HepG2 (cell line): ENCODE measurements at regions of chr6 and their contacts with region 1.

Region 1: GRCh38 chr6:28225056-28225834 is at the start of gene ZSCAN9:
- DNase-seq: peak; percentile 86
- ATAC-seq: peak; percentile 97
- H3K4me3 ChIP-seq: peak within 1 kb of the TSS; percentile 91 to 99 (median 99)
- H3K27ac ChIP-seq: peak within 1 kb of the TSS; percentile 55
- H3K4me1 ChIP-seq: peaks cover 24% of the 10 kb centered on the region
- H3K27me3 ChIP-seq: no peaks in the 10 kb centered on the region; a peak in 2 of 5 replicates
- CTCF ChIP-seq: peak; percentile 35
- EP300 ChIP-seq: no peak
- POLR2A ChIP-seq: peak; percentile 79 to 81
- RAD21 ChIP-seq: peak; percentile 45; the same call in 1 of the 2 replicates
- total RNA-seq, gene ZSCAN9: 17.2 and 17.8 TPM in 2 replicates

Region 2: DNA sequence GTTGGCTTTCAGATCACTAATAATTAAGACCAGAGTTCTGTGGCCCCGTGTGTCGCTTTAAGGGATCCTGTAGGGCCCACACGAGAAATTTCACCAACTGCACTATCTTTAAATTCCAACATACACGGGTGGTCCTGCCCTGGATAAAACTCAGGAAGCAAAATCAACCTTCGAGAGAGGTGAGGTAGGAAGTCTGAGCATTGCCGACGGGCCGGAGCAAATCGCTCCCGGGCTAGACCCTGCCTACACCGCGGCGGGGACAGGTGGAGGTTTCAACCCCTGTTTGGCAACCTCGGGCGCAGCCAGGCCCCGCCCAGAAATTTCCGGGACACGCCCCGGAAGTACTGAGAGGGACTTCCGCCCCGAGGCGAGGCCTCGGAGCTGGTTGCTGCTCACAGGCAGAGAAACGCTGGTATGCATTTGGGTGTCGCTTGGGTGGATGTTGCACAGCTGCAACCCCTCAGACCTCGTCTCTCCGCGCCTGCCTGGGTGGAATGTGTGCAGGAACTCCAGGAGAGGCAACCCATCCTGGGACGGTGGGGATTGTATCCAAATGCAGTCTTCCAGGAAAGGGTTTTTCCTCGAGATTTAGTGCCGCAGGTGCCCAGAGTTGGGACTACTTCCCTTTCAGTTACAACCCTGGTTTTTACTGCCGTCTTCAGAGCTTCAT is 63.7 kb before region 1 on chr6:
- CTCF ChIA-PET with region 1: no interaction called
- POLR2A ChIA-PET with region 1: no interaction called
- in situ Hi-C with region 1: no loop called
- intact Hi-C with region 1: loop called (anchors 5 kb)
- DNase-seq: peak; percentile 79
- ATAC-seq: peak; percentile 98
- H3K4me3 ChIP-seq: peak overlapping the region; percentile 65 to 82 (median 74)
- H3K27ac ChIP-seq: peak overlapping the region; percentile 50
- H3K4me1 ChIP-seq: peaks cover 13% of the 10 kb centered on the region
- H3K27me3 ChIP-seq: no peaks in the 10 kb centered on the region; a peak in 1 of 5 replicates
- CTCF ChIP-seq: peak; percentile 13; the same call in 1 of the 2 replicates
- EP300 ChIP-seq: no peak
- POLR2A ChIP-seq: peak; percentile 92 to 99
- RAD21 ChIP-seq: peak; percentile 56

Region 3: GRCh38 chr6:28355743-28356665 is 130.8 kb after region 1 on chr6:
- CTCF ChIA-PET with region 1: no interaction called
- POLR2A ChIA-PET with region 1: interaction called, 6 read pairs
- in situ Hi-C with region 1: no loop called
- intact Hi-C with region 1: loop called (anchors 2 kb)
- DNase-seq: peak; percentile 90
- ATAC-seq: peak; percentile 89
- H3K4me3 ChIP-seq: peak overlapping the region; percentile 70 to 82 (median 77)
- H3K27ac ChIP-seq: peak overlapping the region; percentile 75
- H3K4me1 ChIP-seq: peaks cover 33% of the 10 kb centered on the region
- H3K27me3 ChIP-seq: no peaks in the 10 kb centered on the region; a peak in 1 of 5 replicates
- CTCF ChIP-seq: peak; percentile 91
- EP300 ChIP-seq: no peak
- POLR2A ChIP-seq: peak in 1 of 2 experiments; percentile 65; a peak in 1 of 4 replicates
- RAD21 ChIP-seq: peak; percentile 81